ENCODE measurements at regions of chr1 and their contacts with region 1.

Region 1: DNA sequence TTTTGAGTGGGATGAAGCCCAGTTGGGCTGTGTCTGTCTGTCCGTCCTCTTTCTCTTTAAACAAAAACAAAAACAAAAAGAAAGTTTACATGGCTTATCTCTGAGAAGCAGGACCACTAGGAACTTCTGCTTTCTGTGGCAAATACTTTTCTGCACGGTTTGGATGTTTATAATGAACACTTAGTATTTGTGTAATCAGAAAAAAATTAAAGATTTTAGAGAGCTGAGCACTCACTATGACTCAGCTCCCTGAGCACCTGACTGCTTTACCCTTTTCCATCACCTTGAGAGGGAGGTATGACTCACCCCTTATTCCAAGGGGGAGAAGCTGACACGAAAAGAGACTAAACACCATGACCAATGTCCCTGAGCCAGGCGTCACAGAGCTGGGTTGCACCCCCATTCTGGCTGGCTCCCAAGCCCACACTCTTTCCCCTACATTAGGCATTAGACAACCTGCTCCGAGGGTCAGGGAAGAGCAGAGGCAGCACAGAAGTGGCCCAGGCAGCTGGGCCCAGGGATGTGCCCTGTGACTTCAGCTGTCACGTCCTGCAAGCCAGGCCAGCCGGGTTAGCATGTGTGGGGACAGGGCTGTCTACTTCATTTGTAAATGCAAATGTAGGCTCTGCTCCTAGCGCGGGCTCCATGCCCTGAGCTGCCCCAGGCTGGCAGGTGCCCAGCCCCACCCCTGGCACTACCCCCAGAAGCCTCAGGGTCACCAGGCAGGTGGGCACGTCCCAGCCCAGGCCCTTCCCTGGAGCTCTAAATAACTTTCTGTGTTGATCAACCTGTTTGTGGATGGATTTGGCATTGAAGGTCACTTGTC is 30.4 kb downstream of the RAP1GAP start:
- DNase-seq: peak; percentile 92 to 93
- H3K4me3 ChIP-seq: no peak overlapping the region
- H3K27ac ChIP-seq: peak overlapping the region; percentile 99
- H3K4me1 ChIP-seq: peaks cover 61% of the 10 kb centered on the region
- H3K27me3 ChIP-seq: no peaks in the 10 kb centered on the region
- CTCF ChIP-seq: no peak

Region 2: DNA sequence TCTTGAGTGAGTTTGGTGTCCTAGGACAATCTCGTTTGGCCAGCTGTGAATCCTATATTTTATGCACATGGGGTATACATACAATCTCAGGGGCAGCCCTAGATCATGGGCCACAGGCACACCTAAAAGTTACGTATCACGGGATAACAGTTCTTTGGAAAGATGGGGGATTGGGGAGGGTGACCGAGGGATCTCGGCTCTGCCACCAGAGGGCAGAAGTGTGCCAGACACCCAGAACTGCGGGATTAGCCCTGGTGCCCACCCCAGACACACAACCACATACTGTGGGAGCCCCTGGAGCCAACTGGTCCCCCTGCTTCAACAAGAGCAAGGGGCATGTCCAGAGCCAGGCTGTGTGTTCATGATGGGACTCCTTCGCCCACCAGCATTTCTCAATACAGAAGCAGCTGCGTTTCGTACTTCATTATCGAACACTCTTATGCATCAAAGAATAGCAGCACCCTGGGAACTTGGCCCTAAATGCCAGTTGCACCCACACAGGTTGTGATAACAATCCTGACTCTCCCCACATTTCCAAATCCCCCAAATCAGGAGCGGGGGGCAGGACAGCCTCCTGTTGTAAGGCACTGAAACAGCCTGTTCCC is 1876.5 kb before region 1 on chr1:
- CTCF ChIA-PET with region 1: no interaction called
- POLR2A ChIA-PET with region 1: no interaction called
- intact Hi-C with region 1: loop called (anchors 10 kb)
- DNase-seq: peak in 1 of 2 experiments; percentile 28
- H3K4me3 ChIP-seq: no peak overlapping the region
- H3K27ac ChIP-seq: no peak overlapping the region
- H3K4me1 ChIP-seq: peaks cover 18% of the 10 kb centered on the region
- H3K27me3 ChIP-seq: no peaks in the 10 kb centered on the region
- CTCF ChIP-seq: peak; percentile 70

Region 3: GRCh38 chr1:20847611-20848080 is 791.1 kb before region 1 on chr1:
- CTCF ChIA-PET with region 1: no interaction called
- POLR2A ChIA-PET with region 1: no interaction called
- intact Hi-C with region 1: no loop called
- DNase-seq: peak in 1 of 2 experiments; percentile 65
- H3K4me3 ChIP-seq: no peak overlapping the region
- H3K27ac ChIP-seq: no peak overlapping the region
- H3K4me1 ChIP-seq: 0 out of 2 replicates have a peak, but pooled peaks cover 9% of the 10 kb centered on the region
- H3K27me3 ChIP-seq: no peaks in the 10 kb centered on the region
- CTCF ChIP-seq: no peak

Region 4: GRCh38 chr1:21232044-21232443 is 406.7 kb before region 1 on chr1:
- CTCF ChIA-PET with region 1: no interaction called
- POLR2A ChIA-PET with region 1: interaction called, 16 read pairs
- intact Hi-C with region 1: no loop called
- DNase-seq: peak in 1 of 2 experiments; percentile 27
- H3K4me3 ChIP-seq: no peak overlapping the region
- H3K27ac ChIP-seq: no peak overlapping the region
- H3K4me1 ChIP-seq: no peaks in the 10 kb centered on the region
- H3K27me3 ChIP-seq: no peaks in the 10 kb centered on the region
- CTCF ChIP-seq: peak; percentile 79

Region 5: DNA sequence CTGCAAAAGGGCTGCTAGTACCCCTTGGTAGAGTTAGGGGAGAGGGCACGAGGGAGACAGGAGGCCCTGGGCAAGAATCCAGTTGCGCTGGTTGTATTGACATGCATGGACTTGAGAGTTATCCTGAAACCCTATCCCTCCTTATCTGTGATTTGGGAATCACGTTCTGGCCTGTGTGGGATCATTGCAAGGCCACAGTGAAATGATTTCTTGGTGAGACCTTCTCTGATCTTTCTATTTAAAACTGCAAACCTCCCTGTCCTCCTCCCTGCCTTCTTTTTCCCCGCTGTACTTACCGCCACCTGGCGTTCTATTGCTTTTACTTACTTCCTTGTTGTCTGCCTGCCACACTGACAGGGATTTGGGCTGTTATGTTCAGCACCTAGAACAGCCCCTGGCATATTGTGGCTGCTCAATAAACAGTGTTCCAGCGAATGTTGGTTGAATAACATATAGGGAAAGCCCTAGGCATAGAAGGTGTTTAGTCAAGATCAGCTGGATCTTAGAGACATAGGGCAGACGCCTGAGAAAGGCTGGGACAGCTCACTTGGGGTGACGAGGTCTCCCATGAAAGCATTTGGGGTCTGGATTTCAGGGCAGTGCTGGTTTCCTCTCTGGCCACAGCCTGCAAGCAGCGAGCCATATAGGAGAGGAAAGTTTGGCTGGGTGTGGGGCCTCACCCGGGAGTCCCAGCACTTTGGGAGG is 103.9 kb before region 1 on chr1:
- CTCF ChIA-PET with region 1: no interaction called
- POLR2A ChIA-PET with region 1: no interaction called
- intact Hi-C with region 1: no loop called
- DNase-seq: peak; percentile 32 to 43
- H3K4me3 ChIP-seq: no peak overlapping the region
- H3K27ac ChIP-seq: no peak overlapping the region
- H3K4me1 ChIP-seq: no peaks in the 10 kb centered on the region
- H3K27me3 ChIP-seq: no peaks in the 10 kb centered on the region
- CTCF ChIP-seq: peak; percentile 59

Region 6: DNA sequence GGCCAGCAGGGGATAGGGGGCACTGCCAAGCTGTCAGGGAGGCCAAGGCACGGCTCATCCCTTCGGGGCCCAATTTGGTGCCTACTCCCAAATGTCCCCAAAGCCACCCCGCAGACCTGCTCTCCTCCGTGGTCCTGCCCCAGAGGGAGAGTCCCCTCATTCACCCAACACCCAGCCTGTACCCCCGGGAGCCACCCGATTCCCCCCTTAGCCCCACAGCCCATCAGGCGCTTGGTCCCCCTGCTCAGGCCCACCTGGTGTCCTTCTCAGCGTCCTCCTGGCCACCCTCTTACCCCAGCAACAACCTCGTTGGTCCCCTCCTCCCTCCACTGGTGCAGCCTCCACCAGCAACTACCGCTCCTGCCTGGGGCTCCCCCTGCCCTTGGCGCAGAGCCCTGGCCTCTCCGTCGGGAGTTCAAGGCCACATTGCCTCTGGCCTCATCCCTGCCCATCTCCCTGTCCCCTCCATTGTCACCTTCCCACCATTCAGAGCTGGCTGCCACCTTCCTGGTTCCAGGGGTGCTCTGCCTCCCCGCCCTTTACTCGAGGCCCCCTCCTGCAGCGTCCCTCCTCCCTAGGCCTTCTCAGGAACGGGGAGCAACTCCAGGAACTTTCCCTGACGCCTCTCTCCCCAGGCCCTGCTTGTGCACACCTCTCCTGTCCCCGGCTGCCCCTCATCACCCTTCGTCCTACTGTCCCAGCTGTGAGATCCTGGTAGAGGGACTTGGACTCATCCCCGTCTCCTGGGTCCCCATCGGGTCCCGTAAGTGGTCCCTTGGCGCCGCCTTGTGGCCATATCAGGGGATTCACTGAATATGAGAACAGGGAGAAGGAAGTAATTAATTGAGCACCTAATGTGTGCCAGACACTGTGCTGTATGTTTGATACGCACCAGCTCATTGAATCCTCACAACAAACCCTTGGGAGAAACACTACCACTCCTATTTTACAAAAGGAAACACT is 43.5 kb before region 1 on chr1:
- CTCF ChIA-PET with region 1: no interaction called
- POLR2A ChIA-PET with region 1: no interaction called
- intact Hi-C with region 1: loop called (anchors 2 kb)
- DNase-seq: peak in 1 of 2 experiments; percentile 64
- H3K4me3 ChIP-seq: no peak overlapping the region
- H3K27ac ChIP-seq: no peak overlapping the region
- H3K4me1 ChIP-seq: peaks cover 11% of the 10 kb centered on the region; the same call in 1 of the 2 replicates
- H3K27me3 ChIP-seq: no peaks in the 10 kb centered on the region
- CTCF ChIP-seq: peak; percentile 79

Region 7: GRCh38 chr1:21614419-21615115 is 24.2 kb before region 1 on chr1:
- CTCF ChIA-PET with region 1: no interaction called
- POLR2A ChIA-PET with region 1: interaction called, 5 read pairs
- intact Hi-C with region 1: loop called (anchors 2 kb)
- DNase-seq: peak; percentile 38 to 67
- H3K4me3 ChIP-seq: no peak overlapping the region
- H3K27ac ChIP-seq: peak overlapping the region; percentile 58
- H3K4me1 ChIP-seq: peaks cover 16% of the 10 kb centered on the region
- H3K27me3 ChIP-seq: no peaks in the 10 kb centered on the region
- CTCF ChIP-seq: no peak

Region 8: GRCh38 chr1:21624578-21625389 is 14.0 kb before region 1 on chr1:
- CTCF ChIA-PET with region 1: interaction called, 8 read pairs
- POLR2A ChIA-PET with region 1: interaction called, 11 read pairs
- intact Hi-C with region 1: loop called (anchors 1 kb)
- DNase-seq: no peak
- H3K4me3 ChIP-seq: no peak overlapping the region
- H3K27ac ChIP-seq: 0 out of 2 replicates have a peak overlapping the region, but pooled peaks have one; percentile 96
- H3K4me1 ChIP-seq: peaks cover 57% of the 10 kb centered on the region
- H3K27me3 ChIP-seq: no peaks in the 10 kb centered on the region
- CTCF ChIP-seq: no peak

Region 9: GRCh38 chr1:21896652-21897532 is 258.1 kb after region 1 on chr1:
- CTCF ChIA-PET with region 1: no interaction called
- POLR2A ChIA-PET with region 1: no interaction called
- intact Hi-C with region 1: no loop called
- DNase-seq: peak in 1 of 2 experiments; percentile 72
- H3K4me3 ChIP-seq: no peak overlapping the region
- H3K27ac ChIP-seq: no peak overlapping the region
- H3K4me1 ChIP-seq: no peaks in the 10 kb centered on the region
- H3K27me3 ChIP-seq: no peaks in the 10 kb centered on the region
- CTCF ChIP-seq: no peak